A549 (cell line): ENCODE measurements at regions of chr17 and their contacts with region 1.

Region 1: GRCh38 chr17:62819475-62820212 is 11.5 kb upstream of the MARCHF10 start:
- DNase-seq: peak; percentile 96 to 97
- ATAC-seq: peak; percentile 94 to 98
- H3K4me3 ChIP-seq: no peak overlapping the region
- H3K27ac ChIP-seq: peak overlapping the region; percentile 91 to 95
- H3K4me1 ChIP-seq: peaks cover 65% of the 10 kb centered on the region
- CTCF ChIP-seq: no peak
- EP300 ChIP-seq: peak in 1 of 2 experiments; percentile 80; a peak in 3 of 5 replicates
- POLR2A ChIP-seq: no peak
- RAD21 ChIP-seq: peak; percentile 53 to 66; a peak in 4 of 5 replicates

Region 2: GRCh38 chr17:62808196-62808930 is 11.3 kb before region 1 on chr17 and contains the start of gene MARCHF10:
- CTCF ChIA-PET with region 1: interaction called, 12 read pairs
- POLR2A ChIA-PET with region 1: interaction called, 3 read pairs
- DNase-seq: no peak
- ATAC-seq: peak in 1 of 2 experiments; percentile 32; a peak in 2 of 6 replicates
- H3K4me3 ChIP-seq: peak within 1 kb of the TSS; percentile 29
- H3K27ac ChIP-seq: peak within 1 kb of the TSS; percentile 89 to 90
- H3K4me1 ChIP-seq: peaks cover 37% of the 10 kb centered on the region
- CTCF ChIP-seq: no peak
- EP300 ChIP-seq: no peak
- POLR2A ChIP-seq: no peak
- RAD21 ChIP-seq: no peak
- polyA plus RNA-seq, gene MARCHF10: 0.57 and 0.73 TPM in 2 replicates